ENCODE measurements at regions of chr16 and their contacts with region 1.

Region 1: GRCh38 chr16:68093816-68094613 is 8.8 kb downstream of the NFATC3 start:
- DNase-seq: peak; percentile 35
- H3K4me3 Mint-ChIP-seq: no peak overlapping the region
- H3K27ac Mint-ChIP-seq: peak overlapping the region; percentile 18
- H3K4me1 Mint-ChIP-seq: peaks cover 56% of the 10 kb centered on the region
- H3K27me3 Mint-ChIP-seq: no peaks in the 10 kb centered on the region
- CTCF ChIP-seq: peak; percentile 43

Region 2: DNA sequence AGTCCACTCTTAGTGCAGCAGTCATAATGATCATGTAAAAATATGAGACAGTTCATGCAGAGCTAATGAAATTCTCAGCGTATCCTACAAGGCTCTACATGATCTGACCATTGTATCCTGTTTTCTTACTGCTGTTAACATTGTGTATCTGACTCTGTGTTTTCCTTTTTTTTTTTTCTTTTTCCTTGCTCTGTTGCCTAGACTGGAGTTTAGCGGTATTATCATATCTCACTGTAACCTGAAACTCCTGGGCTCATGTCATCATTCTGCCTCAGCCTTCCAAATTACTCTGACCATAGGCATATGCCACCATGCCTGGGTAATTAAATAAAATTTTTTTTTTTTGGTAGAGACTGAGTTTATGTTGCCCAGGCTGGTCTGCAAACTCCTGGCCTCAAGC is 58.8 kb before region 1 on chr16:
- CTCF ChIA-PET with region 1: no interaction called
- POLR2A ChIA-PET with region 1: no interaction called
- intact Hi-C with region 1: no loop called
- DNase-seq: no peak
- H3K4me3 Mint-ChIP-seq: no peak overlapping the region
- H3K27ac Mint-ChIP-seq: no peak overlapping the region
- H3K4me1 Mint-ChIP-seq: peaks cover 22% of the 10 kb centered on the region
- H3K27me3 Mint-ChIP-seq: no peaks in the 10 kb centered on the region
- CTCF ChIP-seq: no peak

Region 3: DNA sequence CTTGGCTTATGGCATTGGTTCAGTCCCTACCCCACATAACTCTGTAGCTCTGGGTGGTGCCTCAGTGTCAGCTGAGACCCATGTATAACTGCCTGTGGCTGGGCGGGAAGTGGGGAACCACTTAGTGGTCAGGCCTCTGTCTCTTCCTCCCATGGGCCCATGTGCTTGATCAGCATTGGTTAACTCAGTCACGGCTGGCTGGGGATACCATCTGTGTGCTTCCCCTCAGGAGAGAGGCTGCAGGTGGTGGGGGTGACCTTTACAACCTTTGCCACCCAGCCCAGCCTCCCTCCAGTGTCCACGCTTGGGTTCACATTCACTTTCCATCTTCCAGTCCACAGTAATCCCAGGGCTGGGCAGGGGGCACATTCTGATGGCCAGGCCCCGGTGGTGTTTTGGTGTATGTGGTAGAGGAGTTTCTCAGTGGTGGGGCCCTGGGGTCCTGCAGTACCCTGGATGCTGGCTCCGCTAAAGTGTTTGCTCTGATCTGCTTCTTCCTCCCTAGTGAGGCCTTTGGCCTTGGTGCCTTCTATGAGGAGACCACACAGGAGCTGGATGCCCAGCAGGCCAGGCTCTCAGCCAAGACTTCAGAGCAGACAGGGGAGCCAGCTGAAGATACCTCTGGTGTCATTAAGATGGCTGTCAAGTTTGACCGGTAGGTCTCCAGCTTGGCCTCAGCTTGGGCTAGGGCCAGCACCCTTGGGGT is 19.0 kb before region 1 on chr16:
- CTCF ChIA-PET with region 1: interaction called, 8 read pairs
- POLR2A ChIA-PET with region 1: interaction called, 104 read pairs
- intact Hi-C with region 1: no loop called
- DNase-seq: no peak
- H3K4me3 Mint-ChIP-seq: no peak overlapping the region
- H3K27ac Mint-ChIP-seq: no peak overlapping the region
- H3K4me1 Mint-ChIP-seq: peaks cover 5% of the 10 kb centered on the region
- H3K27me3 Mint-ChIP-seq: no peaks in the 10 kb centered on the region
- CTCF ChIP-seq: no peak

Region 4: GRCh38 chr16:68116256-68116867 is 22.3 kb after region 1 on chr16:
- CTCF ChIA-PET with region 1: interaction called, 12 read pairs
- POLR2A ChIA-PET with region 1: interaction called, 9 read pairs
- intact Hi-C with region 1: no loop called
- DNase-seq: peak; percentile 53
- H3K4me3 Mint-ChIP-seq: no peak overlapping the region
- H3K27ac Mint-ChIP-seq: no peak overlapping the region
- H3K4me1 Mint-ChIP-seq: peaks cover 18% of the 10 kb centered on the region
- H3K27me3 Mint-ChIP-seq: no peaks in the 10 kb centered on the region
- CTCF ChIP-seq: peak; percentile 53